PC-9 (cell line): ENCODE measurements at regions of chr20 and their contacts with region 1.

Region 1: GRCh38 chr20:48784273-48785014 is 43.4 kb downstream of the PREX1 start:
- DNase-seq: no peak
- H3K4me3 ChIP-seq: no peak overlapping the region
- H3K27ac ChIP-seq: no peak overlapping the region
- H3K4me1 ChIP-seq: 0 out of 2 replicates have a peak, but pooled peaks cover 3% of the 10 kb centered on the region
- H3K27me3 ChIP-seq: peaks cover 9% of the 10 kb centered on the region; the same call in 1 of the 2 replicates
- CTCF ChIP-seq: no peak

Region 2: DNA sequence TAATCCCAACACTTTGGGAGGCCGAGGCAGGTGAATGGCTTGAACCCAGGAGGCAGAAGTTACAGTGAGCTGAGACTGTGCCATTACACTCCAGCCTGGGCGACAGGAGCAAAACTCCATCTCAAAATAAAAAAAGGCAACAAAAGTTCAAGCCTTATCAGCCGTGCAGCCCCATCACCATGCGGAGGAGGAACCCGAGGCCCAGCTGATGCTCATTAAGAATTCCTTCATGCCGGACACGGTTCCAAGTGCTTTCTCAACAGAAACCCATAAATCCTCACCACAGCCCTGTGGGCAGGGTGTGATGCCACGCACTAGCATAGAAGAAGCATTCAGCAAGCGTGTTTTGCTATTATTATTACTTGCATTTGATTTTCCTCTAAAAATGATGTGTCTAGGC is 12.9 kb before region 1 on chr20:
- CTCF ChIA-PET with region 1: no interaction called
- POLR2A ChIA-PET with region 1: no interaction called
- intact Hi-C with region 1: loop called (anchors 1 kb)
- DNase-seq: no peak
- H3K4me3 ChIP-seq: no peak overlapping the region
- H3K27ac ChIP-seq: no peak overlapping the region
- H3K4me1 ChIP-seq: no peaks in the 10 kb centered on the region
- H3K27me3 ChIP-seq: no peaks in the 10 kb centered on the region
- CTCF ChIP-seq: no peak